ENCODE measurements at regions of chr1 and their contacts with region 1.

Region 1: GRCh38 chr1:95233737-95234500 is at the start of gene RWDD3:
- DNase-seq: peak; percentile 90
- H3K4me3 Mint-ChIP-seq: peak within 1 kb of the TSS; percentile 91
- H3K27ac Mint-ChIP-seq: peak within 1 kb of the TSS; percentile 87
- H3K4me1 Mint-ChIP-seq: peaks cover 18% of the 10 kb centered on the region
- H3K27me3 Mint-ChIP-seq: no peaks in the 10 kb centered on the region
- CTCF ChIP-seq: peak; percentile 89
- total RNA-seq, gene RWDD3: 10.3 and 14.7 TPM in 2 replicates

Region 2: GRCh38 chr1:94926915-94927404 is 307.0 kb before region 1 on chr1 and contains the start of gene CNN3:
- CTCF ChIA-PET with region 1: interaction called, 3 read pairs
- POLR2A ChIA-PET with region 1: no interaction called
- intact Hi-C with region 1: loop called (anchors 10 kb)
- DNase-seq: peak; percentile 85
- H3K4me3 Mint-ChIP-seq: peak within 1 kb of the TSS; percentile 97
- H3K27ac Mint-ChIP-seq: peak within 1 kb of the TSS; percentile 69
- H3K4me1 Mint-ChIP-seq: peaks cover 22% of the 10 kb centered on the region
- H3K27me3 Mint-ChIP-seq: no peaks in the 10 kb centered on the region
- CTCF ChIP-seq: no peak
- total RNA-seq, gene CNN3: 44.5 and 48.2 TPM in 2 replicates

Region 3: DNA sequence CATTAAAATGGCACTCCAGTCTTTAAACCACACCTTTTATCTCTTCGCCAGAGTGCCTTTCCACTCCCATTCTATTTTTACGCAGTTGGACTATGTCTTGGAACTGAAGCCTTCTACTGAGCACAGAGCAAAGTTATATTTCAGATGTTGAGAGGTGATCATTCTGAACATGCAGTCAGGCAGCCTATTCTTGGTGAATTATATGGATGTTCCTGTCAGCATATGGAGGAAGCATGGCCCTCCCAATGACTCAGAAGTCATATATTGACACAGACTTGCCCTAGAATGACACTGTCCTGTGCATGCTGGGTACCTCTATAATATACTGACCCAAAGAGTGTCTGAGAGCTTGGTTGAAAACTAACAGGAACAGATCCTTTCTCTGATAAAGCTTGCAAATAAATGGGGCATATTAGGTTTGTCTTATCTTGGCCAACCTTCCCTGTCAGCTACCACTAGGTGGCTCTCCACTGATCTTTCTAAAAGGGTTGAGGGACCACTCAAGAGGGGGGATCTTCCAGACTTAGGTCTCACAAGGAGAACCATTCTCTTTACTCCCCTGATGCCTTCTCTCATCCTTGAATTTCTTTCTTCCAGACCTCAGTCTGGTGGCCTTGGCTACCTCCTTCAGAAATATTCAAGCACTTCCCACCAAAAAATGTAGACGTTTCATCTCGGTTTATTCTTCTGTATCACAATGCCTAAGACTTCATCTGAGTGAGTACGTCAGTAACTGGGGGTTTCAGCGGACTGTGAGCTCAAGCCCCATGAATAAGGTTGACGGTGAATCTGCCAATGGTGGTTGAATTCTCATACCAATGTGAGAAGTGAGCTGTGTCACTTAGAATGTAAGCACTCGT is 149.4 kb before region 1 on chr1:
- CTCF ChIA-PET with region 1: interaction called, 25 read pairs
- POLR2A ChIA-PET with region 1: interaction called, 7 read pairs
- intact Hi-C with region 1: loop called (anchors 1 kb)
- DNase-seq: peak; percentile 44
- H3K4me3 Mint-ChIP-seq: no peak overlapping the region
- H3K27ac Mint-ChIP-seq: no peak overlapping the region
- H3K4me1 Mint-ChIP-seq: no peaks in the 10 kb centered on the region
- H3K27me3 Mint-ChIP-seq: no peaks in the 10 kb centered on the region
- CTCF ChIP-seq: peak; percentile 66

Region 4: GRCh38 chr1:95197616-95198252 is 36.2 kb before region 1 on chr1:
- CTCF ChIA-PET with region 1: interaction called, 11 read pairs
- POLR2A ChIA-PET with region 1: interaction called, 13 read pairs
- intact Hi-C with region 1: no loop called
- DNase-seq: peak; percentile 47
- H3K4me3 Mint-ChIP-seq: no peak overlapping the region
- H3K27ac Mint-ChIP-seq: peak overlapping the region; percentile 10
- H3K4me1 Mint-ChIP-seq: peaks cover 12% of the 10 kb centered on the region
- H3K27me3 Mint-ChIP-seq: no peaks in the 10 kb centered on the region
- CTCF ChIP-seq: no peak

Region 5: DNA sequence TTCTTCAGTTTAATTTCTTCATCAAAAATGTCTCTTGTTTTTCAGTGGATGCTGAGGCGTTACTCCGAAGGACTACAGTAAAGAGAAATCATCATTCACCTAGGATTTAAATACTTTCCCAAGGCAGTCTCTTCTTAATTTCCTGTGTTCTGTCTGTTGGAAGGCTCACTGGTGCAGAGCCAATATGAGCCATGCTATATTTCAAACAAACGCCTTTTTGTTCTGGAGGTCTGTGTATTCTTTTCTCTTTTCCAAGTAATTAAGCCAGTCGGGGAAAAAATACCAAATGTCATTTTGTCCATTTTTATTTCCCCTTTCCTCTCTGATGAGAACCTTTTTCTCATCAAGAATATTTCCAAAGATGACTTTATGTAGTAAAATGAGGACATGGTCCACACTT is 206.6 kb after region 1 on chr1:
- CTCF ChIA-PET with region 1: no interaction called
- POLR2A ChIA-PET with region 1: no interaction called
- intact Hi-C with region 1: no loop called
- DNase-seq: no peak
- H3K4me3 Mint-ChIP-seq: no peak overlapping the region
- H3K27ac Mint-ChIP-seq: no peak overlapping the region
- H3K4me1 Mint-ChIP-seq: no peaks in the 10 kb centered on the region
- H3K27me3 Mint-ChIP-seq: no peaks in the 10 kb centered on the region
- CTCF ChIP-seq: no peak